Activated CD4-positive, alpha-beta T cell treated with anti-CD3 and anti-CD28 coated beads, Interleukin-2, amount 10 ng/mL, durations not matched to agents 7 days and 5 days (primary cell): ENCODE measurements at regions of chr17 and their contacts with region 1.

Region 1: GRCh38 chr17:77054936-77055335 is 85.8 kb upstream of the SEC14L1 start:
- DNase-seq: no peak
- H3K4me3 Mint-ChIP-seq: no peak overlapping the region
- H3K27ac Mint-ChIP-seq: no peak overlapping the region
- H3K4me1 Mint-ChIP-seq: peaks cover 1% of the 10 kb centered on the region
- H3K27me3 Mint-ChIP-seq: peaks cover 8% of the 10 kb centered on the region

Region 2: DNA sequence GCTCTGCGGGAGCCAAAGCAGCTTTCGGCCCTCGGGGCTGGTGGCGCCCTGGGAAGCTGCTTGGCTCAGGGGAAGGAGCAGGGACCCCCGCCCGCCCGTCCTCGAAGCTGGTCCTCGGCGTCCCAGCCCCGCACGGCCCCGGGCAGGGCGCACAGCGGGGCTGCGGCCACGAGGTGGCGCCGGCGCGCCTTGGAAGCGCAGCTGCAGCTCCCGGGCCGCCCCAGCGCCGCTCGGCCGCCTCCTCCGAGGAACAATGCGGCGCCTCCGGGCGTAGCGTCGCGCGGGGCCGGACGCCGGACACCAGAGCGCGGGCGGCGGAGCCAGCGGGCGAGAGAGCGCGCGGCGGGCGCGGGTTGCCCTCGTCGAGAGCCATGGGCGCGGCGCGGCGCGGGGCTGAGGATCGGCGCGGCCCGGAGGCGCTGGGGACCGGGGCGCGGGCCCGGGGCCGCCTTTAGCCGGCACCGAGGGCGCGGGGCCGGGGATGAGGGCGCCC is 186.7 kb before region 1 on chr17 and contains the start of gene MGAT5B:
- CTCF ChIA-PET with region 1: interaction called, 32 read pairs
- POLR2A ChIA-PET with region 1: no interaction called
- DNase-seq: peak; percentile 72
- H3K4me3 Mint-ChIP-seq: peak within 1 kb of the TSS; percentile 61
- H3K27ac Mint-ChIP-seq: no peak within 1 kb of the TSS
- H3K4me1 Mint-ChIP-seq: peaks cover 8% of the 10 kb centered on the region
- H3K27me3 Mint-ChIP-seq: peaks cover 34% of the 10 kb centered on the region
- total RNA-seq, gene MGAT5B: 0.12 to 0.45 TPM

Region 3: DNA sequence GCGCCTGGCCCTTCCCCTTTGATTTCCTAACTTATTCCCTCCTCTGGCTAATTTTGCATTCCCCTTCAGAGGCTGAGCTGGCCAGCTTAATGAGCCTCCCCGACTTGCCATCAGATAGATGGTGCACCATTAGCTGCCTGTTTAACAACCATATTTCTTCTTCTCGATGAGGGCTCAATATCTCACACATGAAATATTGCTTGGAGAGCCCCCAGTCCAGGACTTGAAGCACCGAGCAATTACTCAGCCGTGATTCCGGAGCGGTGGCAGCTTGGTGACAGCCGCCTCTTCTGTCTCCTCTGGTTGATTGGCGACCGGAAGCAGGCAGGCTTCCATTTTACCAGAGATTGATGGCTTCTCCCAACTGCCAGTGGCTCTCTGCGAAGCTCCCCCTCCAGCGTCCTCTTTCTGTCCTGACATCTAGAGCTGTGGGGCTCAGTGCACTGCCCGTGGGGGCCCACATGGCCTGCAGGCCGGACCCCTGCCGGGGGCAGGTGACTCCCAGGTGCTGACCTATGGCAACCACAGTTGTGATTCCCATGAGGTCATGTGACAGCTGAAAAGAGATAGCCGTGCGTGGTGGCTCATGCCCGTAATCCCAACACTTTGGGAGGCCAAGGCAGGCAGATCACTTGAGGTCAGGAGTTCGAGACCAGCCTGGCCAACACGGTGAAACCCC is 47.8 kb before region 1 on chr17:
- CTCF ChIA-PET with region 1: interaction called, 11 read pairs
- POLR2A ChIA-PET with region 1: no interaction called
- DNase-seq: no peak
- H3K4me3 Mint-ChIP-seq: no peak overlapping the region
- H3K27ac Mint-ChIP-seq: no peak overlapping the region
- H3K4me1 Mint-ChIP-seq: no peaks in the 10 kb centered on the region
- H3K27me3 Mint-ChIP-seq: peaks cover 11% of the 10 kb centered on the region

Region 4: DNA sequence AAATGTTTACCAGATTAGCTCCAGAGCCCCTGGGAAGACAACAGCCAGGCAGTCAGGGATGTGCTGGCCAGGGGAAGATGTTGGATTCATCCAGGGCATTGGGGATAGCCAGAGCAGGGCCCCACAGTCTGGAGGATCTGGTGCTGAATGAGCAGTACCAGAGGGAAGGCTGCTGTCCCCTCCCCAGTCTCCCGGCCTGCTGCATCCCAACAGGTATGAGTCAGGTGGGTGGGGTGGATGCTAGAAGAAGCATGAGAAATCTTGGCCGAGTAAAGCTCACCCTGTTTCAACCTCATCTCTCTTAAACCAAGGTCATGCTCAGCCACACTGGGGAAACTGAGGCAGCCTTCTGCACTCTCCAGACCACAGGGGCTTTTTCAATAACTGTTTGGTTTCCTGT is 14.0 kb after region 1 on chr17:
- CTCF ChIA-PET with region 1: interaction called, 19 read pairs
- POLR2A ChIA-PET with region 1: no interaction called
- DNase-seq: no peak
- H3K4me3 Mint-ChIP-seq: no peak overlapping the region
- H3K27ac Mint-ChIP-seq: no peak overlapping the region
- H3K4me1 Mint-ChIP-seq: peaks cover 1% of the 10 kb centered on the region
- H3K27me3 Mint-ChIP-seq: peaks cover 29% of the 10 kb centered on the region